Activated naive CD4-positive, alpha-beta T cell treated with anti-CD3 and anti-CD28 coated beads, Interleukin-2, amount 10 ng/mL, durations not matched to agents 7 days and 5 days (primary cell): ENCODE measurements at regions of chr1 and their contacts with region 1.

Region 1: DNA sequence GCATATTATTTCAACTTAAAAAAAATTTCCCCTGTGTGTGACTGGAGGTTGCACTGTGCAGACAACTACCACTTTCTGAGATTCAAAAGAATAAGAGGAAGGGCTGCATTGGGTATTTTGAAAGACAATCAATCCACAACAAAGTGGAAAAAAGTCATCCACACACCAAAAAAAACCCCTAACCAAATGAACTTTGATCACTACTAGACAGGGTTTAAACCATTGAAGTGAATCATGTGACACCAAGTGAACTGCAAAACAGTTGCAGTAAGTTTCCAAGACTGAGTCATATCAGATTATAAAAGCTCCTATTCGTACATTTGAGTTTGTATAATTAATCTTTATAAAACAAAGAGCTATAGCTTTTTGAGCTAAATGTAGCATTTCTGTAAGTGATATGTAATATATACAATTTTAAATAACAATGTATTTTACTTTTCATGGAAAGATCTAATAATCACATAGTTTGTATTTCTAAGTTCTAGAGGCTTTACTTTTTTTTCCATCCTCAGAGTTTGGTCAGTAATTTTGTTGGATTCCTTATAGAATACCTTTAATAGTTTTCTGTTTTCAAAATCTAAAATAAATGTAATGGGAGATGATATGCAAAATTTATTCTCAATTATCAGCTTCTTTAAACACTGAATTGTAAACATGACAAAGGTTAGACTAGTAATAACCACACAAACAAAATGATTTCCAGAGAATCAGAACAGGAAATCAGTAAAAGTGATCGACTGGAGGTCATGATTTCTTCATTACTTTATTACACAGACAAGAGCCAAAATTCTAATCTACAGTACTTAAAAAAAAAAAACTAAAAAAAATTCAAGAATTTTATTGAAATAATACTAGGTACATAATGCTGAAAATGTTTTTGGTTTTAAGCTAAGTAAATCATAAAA is 50.5 kb upstream of the GFI1 start:
- DNase-seq: peak; percentile 25
- H3K4me3 Mint-ChIP-seq: peak overlapping the region; percentile 62
- H3K27ac Mint-ChIP-seq: peak overlapping the region; percentile 93
- H3K4me1 Mint-ChIP-seq: peaks cover 80% of the 10 kb centered on the region
- H3K27me3 Mint-ChIP-seq: no peaks in the 10 kb centered on the region

Region 2: DNA sequence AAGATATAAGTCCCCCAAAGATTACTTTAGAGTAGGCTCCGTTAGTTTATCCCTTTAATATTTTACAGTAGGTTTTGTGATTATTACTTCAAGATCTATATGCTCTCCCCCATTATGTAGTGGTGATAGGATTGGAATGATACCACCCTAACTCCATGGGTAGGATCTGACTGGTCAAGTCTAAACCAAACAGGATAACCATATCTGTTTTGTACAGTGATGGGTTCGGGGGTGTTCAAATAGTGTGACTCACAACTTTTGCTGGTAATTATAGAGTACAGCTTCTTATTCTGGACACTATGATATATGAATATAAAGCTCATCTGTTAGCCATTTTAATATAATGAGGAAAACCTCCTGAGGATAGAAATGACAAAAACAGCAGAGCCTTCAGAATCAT is 35.3 kb after region 1 on chr1:
- CTCF ChIA-PET with region 1: interaction called, 12 read pairs
- DNase-seq: no peak
- H3K4me3 Mint-ChIP-seq: no peak overlapping the region
- H3K27ac Mint-ChIP-seq: no peak overlapping the region
- H3K4me1 Mint-ChIP-seq: peaks cover 54% of the 10 kb centered on the region
- H3K27me3 Mint-ChIP-seq: no peaks in the 10 kb centered on the region

Region 3: GRCh38 chr1:92691925-92692324 is 154.7 kb after region 1 on chr1:
- CTCF ChIA-PET with region 1: no interaction called
- DNase-seq: no peak
- H3K4me3 Mint-ChIP-seq: no peak overlapping the region
- H3K27ac Mint-ChIP-seq: no peak overlapping the region
- H3K4me1 Mint-ChIP-seq: peaks cover 5% of the 10 kb centered on the region
- H3K27me3 Mint-ChIP-seq: no peaks in the 10 kb centered on the region